ENCODE measurements at regions of chr2 and their contacts with region 1.

Region 1: DNA sequence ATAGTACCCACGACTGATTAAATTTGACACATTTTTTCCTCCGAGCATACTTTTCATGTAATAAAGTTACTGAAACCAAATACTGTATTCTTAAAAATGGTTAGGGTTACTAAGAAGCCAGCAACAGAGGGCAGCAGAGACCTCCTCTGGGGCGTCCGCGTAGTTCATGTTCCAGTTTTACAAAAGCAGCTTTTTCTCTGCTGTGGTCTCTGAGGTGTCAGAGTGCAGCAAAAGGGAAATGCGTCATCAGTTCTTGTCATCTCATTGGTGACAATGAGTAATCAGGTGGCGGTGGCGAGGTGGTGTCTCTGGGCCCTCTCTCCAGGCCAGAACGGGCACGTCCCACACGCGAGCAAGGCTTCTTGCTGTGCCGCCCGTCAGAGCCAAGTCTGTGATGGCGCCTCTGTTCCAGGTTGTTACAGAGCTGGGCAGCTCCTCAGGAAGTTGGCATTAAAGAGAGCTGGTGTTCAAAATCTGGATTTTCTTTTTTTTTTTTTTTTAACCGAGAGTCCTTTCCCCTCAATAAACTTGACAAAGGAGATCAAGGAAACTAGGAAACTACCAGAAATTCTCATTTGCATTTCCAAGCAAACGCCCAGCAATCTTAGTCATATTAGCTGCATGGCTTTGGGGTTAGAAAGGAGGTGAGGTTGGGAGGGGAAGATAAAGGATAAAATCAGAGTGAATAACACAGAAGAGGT is 98.6 kb upstream of the BZW1 start:
- DNase-seq: peak; percentile 87 to 97
- ATAC-seq: peak; percentile 94 to 99 (median 99)
- H3K4me3 ChIP-seq: peak overlapping the region; percentile 6
- H3K4me3 Mint-ChIP-seq: peak overlapping the region; percentile 78
- H3K27ac ChIP-seq: peak overlapping the region; percentile 97
- H3K27ac Mint-ChIP-seq: peak overlapping the region; percentile 96 to 98
- H3K4me1 ChIP-seq: peaks cover 9% of the 10 kb centered on the region
- H3K4me1 Mint-ChIP-seq: peaks cover 12 to 13% of the 10 kb centered on the region in 2 donors
- H3K27me3 ChIP-seq: no peaks in the 10 kb centered on the region
- H3K27me3 Mint-ChIP-seq: peaks cover 0 to 7% of the 10 kb centered on the region in 2 donors
- CTCF ChIP-seq: peak; percentile 74

Region 2: GRCh38 chr2:200735061-200735460 is 21.9 kb after region 1 on chr2:
- intact Hi-C with region 1: loop called (anchors 1 kb)
- DNase-seq: no peak
- ATAC-seq: no peak
- H3K4me3 ChIP-seq: no peak overlapping the region
- H3K4me3 Mint-ChIP-seq: no peak overlapping the region
- H3K27ac ChIP-seq: no peak overlapping the region
- H3K27ac Mint-ChIP-seq: no peak overlapping the region
- H3K4me1 ChIP-seq: no peaks in the 10 kb centered on the region
- H3K4me1 Mint-ChIP-seq: peaks cover 0 to 5% of the 10 kb centered on the region in 2 donors
- H3K27me3 ChIP-seq: no peaks in the 10 kb centered on the region
- H3K27me3 Mint-ChIP-seq: peaks cover 0 to 7% of the 10 kb centered on the region in 2 donors
- CTCF ChIP-seq: no peak

Region 3: GRCh38 chr2:200864176-200864976 is 151.2 kb after region 1 on chr2 and contains the start of gene CLK1:
- intact Hi-C with region 1: loop called (anchors 1 kb)
- DNase-seq: peak; percentile 93 to 98
- ATAC-seq: peak; percentile 76 to 92 (median 82)
- H3K4me3 ChIP-seq: peak within 1 kb of the TSS; percentile 95
- H3K4me3 Mint-ChIP-seq: peak within 1 kb of the TSS; percentile 93
- H3K27ac ChIP-seq: peak within 1 kb of the TSS; percentile 99
- H3K27ac Mint-ChIP-seq: peak within 1 kb of the TSS; percentile 92 to 99
- H3K4me1 ChIP-seq: peaks cover 23% of the 10 kb centered on the region
- H3K4me1 Mint-ChIP-seq: peaks cover 45 to 58% of the 10 kb centered on the region in 2 donors
- H3K27me3 ChIP-seq: no peaks in the 10 kb centered on the region
- H3K27me3 Mint-ChIP-seq: no peaks in the 10 kb centered on the region
- CTCF ChIP-seq: no peak
- total RNA-seq, gene CLK1: 975 to 1,296 (median 1,070) TPM

Region 4: DNA sequence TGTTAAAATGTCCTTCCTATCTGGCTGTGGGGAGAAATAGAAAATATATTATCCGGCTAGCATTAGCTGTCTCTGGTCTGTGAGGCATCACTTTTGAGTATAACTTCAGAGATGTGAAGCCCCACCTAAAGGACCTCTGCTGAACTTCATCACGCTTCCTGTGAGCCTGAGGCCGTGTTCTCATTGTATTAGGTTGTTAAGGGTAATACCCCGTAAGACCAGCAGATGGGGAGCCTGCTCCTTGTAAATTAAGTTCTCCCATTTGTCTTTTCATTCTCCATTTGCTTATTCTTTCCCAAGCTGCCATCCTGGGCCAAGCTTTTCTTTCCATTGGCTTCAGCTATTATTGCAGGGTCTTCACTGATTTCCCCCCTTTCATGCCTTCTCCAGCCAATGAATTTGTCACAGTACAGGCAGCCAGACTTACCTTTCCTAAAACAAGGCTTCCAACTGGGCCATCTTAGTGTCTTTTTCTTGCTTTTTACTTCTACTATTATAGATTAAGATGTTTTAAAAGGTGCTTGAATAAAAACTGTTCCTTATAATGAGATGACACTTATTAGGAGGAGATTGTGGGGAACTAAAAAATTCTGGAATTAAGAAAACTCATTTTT is 188.4 kb after region 1 on chr2:
- intact Hi-C with region 1: loop called (anchors 2 kb)
- DNase-seq: peak; percentile 55 to 91
- ATAC-seq: peak; percentile 100
- H3K4me3 ChIP-seq: no peak overlapping the region
- H3K4me3 Mint-ChIP-seq: no peak overlapping the region
- H3K27ac ChIP-seq: peak overlapping the region; percentile 34
- H3K27ac Mint-ChIP-seq: peak overlapping the region; percentile 63
- H3K4me1 ChIP-seq: no peaks in the 10 kb centered on the region
- H3K4me1 Mint-ChIP-seq: peaks cover 6 to 8% of the 10 kb centered on the region in 2 donors
- H3K27me3 ChIP-seq: no peaks in the 10 kb centered on the region
- H3K27me3 Mint-ChIP-seq: no peaks in the 10 kb centered on the region
- CTCF ChIP-seq: peak; percentile 87

Region 5: GRCh38 chr2:201118121-201118960 is 405.2 kb after region 1 on chr2:
- intact Hi-C with region 1: loop called (anchors 5 kb)
- DNase-seq: peak; percentile 87 to 93
- ATAC-seq: peak; percentile 46 to 61 (median 54)
- H3K4me3 ChIP-seq: peak overlapping the region; percentile 90
- H3K4me3 Mint-ChIP-seq: peak overlapping the region; percentile 95
- H3K27ac ChIP-seq: peak overlapping the region; percentile 93
- H3K27ac Mint-ChIP-seq: peak overlapping the region; percentile 93 to 100
- H3K4me1 ChIP-seq: peaks cover 50% of the 10 kb centered on the region
- H3K4me1 Mint-ChIP-seq: peaks cover 79 to 82% of the 10 kb centered on the region in 2 donors
- H3K27me3 ChIP-seq: no peaks in the 10 kb centered on the region
- H3K27me3 Mint-ChIP-seq: no peaks in the 10 kb centered on the region
- CTCF ChIP-seq: peak; percentile 40

Region 6: GRCh38 chr2:201451292-201452057 is 738.3 kb after region 1 on chr2 and contains the starts of genes STRADB and TRAK2:
- intact Hi-C with region 1: loop called (anchors 5 kb)
- DNase-seq: peak; percentile 92 to 97
- ATAC-seq: peak; percentile 93 to 98 (median 93)
- H3K4me3 ChIP-seq: peak within 1 kb of the TSS; percentile 65
- H3K4me3 Mint-ChIP-seq: peak within 1 kb of the TSS; percentile 98
- H3K27ac ChIP-seq: peak within 1 kb of the TSS; percentile 72
- H3K27ac Mint-ChIP-seq: peak within 1 kb of the TSS; percentile 95 to 99
- H3K4me1 ChIP-seq: peaks cover 10% of the 10 kb centered on the region
- H3K4me1 Mint-ChIP-seq: peaks cover 29 to 38% of the 10 kb centered on the region in 2 donors
- H3K27me3 ChIP-seq: no peaks in the 10 kb centered on the region
- H3K27me3 Mint-ChIP-seq: no peaks in the 10 kb centered on the region
- CTCF ChIP-seq: peak; percentile 18
- total RNA-seq, gene STRADB: 11.8 to 15.3 (median 14.7) TPM
- total RNA-seq, gene TRAK2: 19.2 to 29.4 (median 26.2) TPM

Measured in natural killer cell (primary cell).